ENCODE measurements at regions of chr1 and their contacts with region 1.

Region 1: GRCh38 chr1:218284934-218285635 is at the start of gene RRP15:
- DNase-seq: peak; percentile 69
- ATAC-seq: peak; percentile 96
- H3K4me3 ChIP-seq: peak within 1 kb of the TSS; percentile 66 to 72
- H3K27ac ChIP-seq: peak within 1 kb of the TSS; percentile 20
- H3K4me1 ChIP-seq: peaks cover 6 to 14% of the 10 kb centered on the region in 2 experiments; a peak in 3 of 4 replicates
- H3K27me3 ChIP-seq: no peaks in the 10 kb centered on the region
- CTCF ChIP-seq: no peak
- POLR2A ChIP-seq: peak; percentile 72
- RAD21 ChIP-seq: no peak
- total RNA-seq, gene RRP15: 25.5 TPM

Region 2: GRCh38 chr1:217630711-217631591 is 654.1 kb before region 1 on chr1 and contains the starts of genes GPATCH2 and SPATA17:
- CTCF ChIA-PET with region 1: no interaction called
- POLR2A ChIA-PET with region 1: no interaction called
- RAD21 ChIA-PET with region 1: no interaction called
- intact Hi-C with region 1: loop called (anchors 10 kb)
- DNase-seq: peak; percentile 83
- ATAC-seq: peak; percentile 89
- H3K4me3 ChIP-seq: peak within 1 kb of the TSS; percentile 73 to 83
- H3K27ac ChIP-seq: peak within 1 kb of the TSS; percentile 63
- H3K4me1 ChIP-seq: peaks cover 0 to 12% of the 10 kb centered on the region in 2 experiments; a peak in 1 of 4 replicates
- H3K27me3 ChIP-seq: no peaks in the 10 kb centered on the region
- CTCF ChIP-seq: peak in 2 of 3 experiments; percentile 6 to 30; a peak in 1 of 6 replicates
- POLR2A ChIP-seq: peak; percentile 79
- RAD21 ChIP-seq: no peak
- total RNA-seq, gene GPATCH2: 11.3 TPM
- total RNA-seq, gene SPATA17: 2.5 TPM

Region 3: GRCh38 chr1:218401998-218402785 is 117.1 kb after region 1 on chr1:
- CTCF ChIA-PET with region 1: no interaction called
- POLR2A ChIA-PET with region 1: no interaction called
- RAD21 ChIA-PET with region 1: no interaction called
- intact Hi-C with region 1: no loop called
- DNase-seq: no peak
- ATAC-seq: no peak
- H3K4me3 ChIP-seq: no peak overlapping the region
- H3K27ac ChIP-seq: no peak overlapping the region
- H3K4me1 ChIP-seq: peaks cover 0 to 13% of the 10 kb centered on the region in 2 experiments; a peak in 2 of 4 replicates
- H3K27me3 ChIP-seq: no peaks in the 10 kb centered on the region
- CTCF ChIP-seq: no peak
- POLR2A ChIP-seq: no peak
- RAD21 ChIP-seq: no peak

Measured in HCT116 (cell line).